HepG2 (cell line): ENCODE measurements at regions of chr6 and their contacts with region 1.

Region 1: DNA sequence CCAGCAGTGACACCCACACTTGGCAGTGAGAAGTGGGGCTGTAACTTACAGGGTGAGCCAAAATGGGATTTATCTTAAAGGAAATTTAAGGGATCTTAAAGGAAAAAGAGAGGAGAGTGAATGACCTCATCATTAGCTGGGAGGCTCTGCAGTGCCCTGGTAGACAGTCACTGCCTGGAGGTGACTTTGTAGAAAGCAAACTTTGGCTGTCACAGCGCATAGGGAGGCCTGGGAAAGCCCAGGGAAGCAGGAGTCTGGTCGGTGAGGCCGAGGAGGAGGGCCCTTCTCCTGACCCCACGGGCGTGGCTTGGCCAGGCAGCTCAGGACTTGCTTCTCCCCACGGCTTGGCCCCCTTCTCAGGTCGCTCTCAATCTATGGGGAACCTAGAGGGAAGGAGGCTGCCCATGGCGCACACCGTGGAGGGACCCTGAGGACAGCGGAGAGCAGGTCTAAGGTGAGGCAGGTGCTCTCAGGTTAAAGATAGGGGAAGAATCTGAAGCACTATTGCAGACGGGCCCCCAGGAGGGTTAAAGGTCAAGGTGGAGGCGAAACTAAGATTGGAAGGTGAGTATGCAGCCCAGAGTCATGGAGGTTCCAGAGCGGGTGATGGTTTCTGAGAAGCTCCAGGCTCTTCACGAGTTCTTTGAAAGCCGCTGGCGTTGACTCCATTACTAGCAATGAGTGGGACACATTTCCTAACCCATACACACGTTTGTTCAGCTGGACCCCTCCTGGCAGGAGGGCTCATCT is 15.6 kb upstream of the RIPK1 start:
- DNase-seq: no peak
- ATAC-seq: peak; percentile 35
- H3K4me3 ChIP-seq: peak overlapping the region; percentile 57 to 80 (median 72)
- H3K27ac ChIP-seq: peak overlapping the region; percentile 85
- H3K4me1 ChIP-seq: peaks cover 46% of the 10 kb centered on the region
- H3K27me3 ChIP-seq: peaks cover 0 to 30% of the 10 kb centered on the region in 2 experiments; a peak in 2 of 5 replicates
- CTCF ChIP-seq: no peak; the same call in 1 of the 2 replicates
- EP300 ChIP-seq: 0 out of 4 replicates have a peak, but pooled peaks of 1 of the 2 experiments have one; percentile 19
- POLR2A ChIP-seq: no peak
- RAD21 ChIP-seq: no peak

Region 2: DNA sequence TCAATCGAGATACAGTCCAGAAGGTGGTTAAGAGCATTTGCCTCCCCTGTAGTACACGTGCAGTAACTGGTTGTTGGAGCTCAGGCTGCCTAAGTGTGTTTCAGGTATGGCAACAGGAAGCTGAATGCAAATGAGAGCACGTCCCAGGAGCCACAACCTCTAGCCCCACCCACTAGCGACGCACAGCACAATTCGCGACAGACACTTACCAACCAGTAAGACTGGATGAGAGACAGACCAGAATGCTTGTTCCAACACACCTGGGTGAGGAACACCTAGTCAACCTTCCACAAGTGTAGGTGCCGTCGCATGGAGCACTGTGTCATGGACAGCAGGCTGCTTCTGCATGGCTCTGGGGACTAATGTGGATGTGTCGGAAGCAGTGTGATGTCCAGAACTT is 203.8 kb before region 1 on chr6:
- CTCF ChIA-PET with region 1: no interaction called
- POLR2A ChIA-PET with region 1: no interaction called
- in situ Hi-C with region 1: no loop called
- intact Hi-C with region 1: loop called (anchors 5 kb)
- DNase-seq: no peak
- ATAC-seq: no peak
- H3K4me3 ChIP-seq: no peak overlapping the region
- H3K27ac ChIP-seq: no peak overlapping the region
- H3K4me1 ChIP-seq: peaks cover 63% of the 10 kb centered on the region
- H3K27me3 ChIP-seq: no peaks in the 10 kb centered on the region
- CTCF ChIP-seq: no peak
- EP300 ChIP-seq: no peak
- POLR2A ChIP-seq: no peak
- RAD21 ChIP-seq: no peak

Region 3: GRCh38 chr6:2999618-3000557 is 52.8 kb before region 1 on chr6 and contains the start of gene NQO2:
- CTCF ChIA-PET with region 1: interaction called, 9 read pairs
- POLR2A ChIA-PET with region 1: interaction called, 122 read pairs
- in situ Hi-C with region 1: loop called (anchors 5 kb)
- intact Hi-C with region 1: loop called (anchors 1 kb)
- DNase-seq: peak; percentile 76
- ATAC-seq: peak; percentile 79
- H3K4me3 ChIP-seq: peak within 1 kb of the TSS; percentile 91 to 100 (median 100)
- H3K27ac ChIP-seq: peak within 1 kb of the TSS; percentile 92
- H3K4me1 ChIP-seq: peaks cover 44% of the 10 kb centered on the region
- H3K27me3 ChIP-seq: no peaks in the 10 kb centered on the region; a peak in 1 of 5 replicates
- CTCF ChIP-seq: peak; percentile 27; the same call in 1 of the 2 replicates
- EP300 ChIP-seq: 0 out of 4 replicates have a peak, but pooled peaks of 1 of the 2 experiments have one; percentile 14
- POLR2A ChIP-seq: peak; percentile 95 to 98
- RAD21 ChIP-seq: peak; percentile 58
- total RNA-seq, gene NQO2: 56.5 and 63.0 TPM in 2 replicates

Region 4: GRCh38 chr6:3026791-3027626 is 25.6 kb before region 1 on chr6:
- CTCF ChIA-PET with region 1: no interaction called
- POLR2A ChIA-PET with region 1: interaction called, 13 read pairs
- in situ Hi-C with region 1: no loop called
- intact Hi-C with region 1: loop called (anchors 1 kb)
- DNase-seq: no peak
- ATAC-seq: no peak
- H3K4me3 ChIP-seq: no peak overlapping the region
- H3K27ac ChIP-seq: no peak overlapping the region
- H3K4me1 ChIP-seq: peaks cover 29% of the 10 kb centered on the region
- H3K27me3 ChIP-seq: no peaks in the 10 kb centered on the region
- CTCF ChIP-seq: no peak
- EP300 ChIP-seq: no peak
- POLR2A ChIP-seq: no peak
- RAD21 ChIP-seq: no peak

Region 5: DNA sequence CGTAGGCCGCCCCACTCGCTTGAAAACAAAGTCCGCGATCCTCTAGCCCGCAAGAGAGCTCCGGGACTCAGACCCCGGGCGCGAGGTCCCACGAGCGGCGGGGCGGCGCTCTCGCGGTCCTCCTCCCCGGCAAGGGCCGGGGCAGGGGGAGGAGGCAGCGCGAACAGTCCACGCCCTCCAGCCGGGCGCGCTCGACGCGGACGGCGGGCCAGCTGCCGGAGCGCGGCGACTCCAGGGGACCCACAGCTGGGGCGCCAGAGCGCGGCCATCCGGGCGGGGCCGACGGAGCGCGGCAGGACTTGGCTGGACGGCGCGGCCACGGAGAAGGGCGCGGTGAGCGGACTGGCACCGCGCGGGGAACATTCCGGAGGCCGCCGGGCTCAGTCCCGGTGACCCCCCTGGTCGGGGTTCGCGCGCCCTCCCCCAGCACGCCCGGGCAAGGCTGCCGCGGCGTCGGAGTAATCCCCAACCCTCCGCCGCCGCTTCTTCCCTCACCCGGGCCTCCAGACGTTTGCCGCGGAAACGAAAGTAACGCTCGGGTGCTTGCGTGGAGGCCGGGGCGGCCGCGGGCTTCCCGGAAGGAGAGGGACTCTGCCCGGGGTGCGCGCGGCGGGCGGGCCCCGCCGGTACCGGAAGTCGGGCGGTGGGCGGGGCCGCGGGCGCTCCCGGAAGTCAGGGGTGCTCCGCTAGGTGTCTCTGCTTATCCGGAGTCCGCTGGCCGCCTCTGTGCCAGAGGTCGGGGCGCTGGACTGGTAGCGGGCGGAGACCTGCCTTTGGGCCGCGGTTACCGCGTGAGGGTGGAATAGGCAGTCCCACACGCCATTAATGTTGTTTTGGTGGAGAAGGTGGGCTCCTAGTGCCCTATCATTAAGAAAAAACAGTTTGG is 15.9 kb after region 1 on chr6 and contains the start of gene RIPK1:
- CTCF ChIA-PET with region 1: no interaction called
- POLR2A ChIA-PET with region 1: interaction called, 28 read pairs
- in situ Hi-C with region 1: no loop called
- intact Hi-C with region 1: no loop called
- DNase-seq: peak; percentile 89
- ATAC-seq: peak; percentile 82
- H3K4me3 ChIP-seq: peak within 1 kb of the TSS; percentile 92 to 99 (median 97)
- H3K27ac ChIP-seq: peak within 1 kb of the TSS; percentile 99
- H3K4me1 ChIP-seq: peaks cover 54% of the 10 kb centered on the region
- H3K27me3 ChIP-seq: no peaks in the 10 kb centered on the region; a peak in 1 of 5 replicates
- CTCF ChIP-seq: peak; percentile 80
- EP300 ChIP-seq: no peak; a peak in 1 of 4 replicates
- POLR2A ChIP-seq: peak; percentile 76 to 94
- RAD21 ChIP-seq: peak; percentile 70
- total RNA-seq, gene RIPK1: 10.3 and 15.0 TPM in 2 replicates